Activated CD8-positive, alpha-beta T cell treated with anti-CD3 and anti-CD28 coated beads for 36 hours (primary cell): ENCODE measurements at regions of chr6 and their contacts with region 1.

Region 1: DNA sequence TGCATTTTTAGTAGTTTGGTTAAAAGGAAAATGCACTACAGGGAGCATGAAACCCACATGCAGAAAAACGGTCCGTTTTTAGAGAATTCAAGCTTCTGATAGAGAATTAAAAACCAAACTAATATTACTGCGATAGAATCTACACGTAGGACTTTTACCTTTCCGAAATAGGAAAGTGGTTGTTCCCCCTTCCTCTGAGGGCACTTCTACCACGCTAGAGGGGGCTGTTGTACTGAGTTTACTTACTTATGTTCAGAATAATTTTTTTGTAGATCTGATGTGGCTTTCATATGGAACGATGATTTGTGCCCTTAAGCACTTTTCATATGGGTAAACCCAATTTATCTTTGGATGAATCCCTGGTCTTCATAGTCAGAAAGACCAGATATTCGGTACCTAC is 264.3 kb upstream of the PLN start:
- DNase-seq: peak; percentile 68
- ATAC-seq: peak; percentile 65
- H3K4me3 Mint-ChIP-seq: no peak overlapping the region
- H3K27ac Mint-ChIP-seq: no peak overlapping the region
- H3K4me1 Mint-ChIP-seq: peaks cover 2% of the 10 kb centered on the region
- H3K27me3 Mint-ChIP-seq: peaks cover 14% of the 10 kb centered on the region
- CTCF ChIP-seq: peak; percentile 85

Region 2: GRCh38 chr6:118228886-118229285 is 54.9 kb before region 1 on chr6:
- CTCF ChIA-PET with region 1: no interaction called
- POLR2A ChIA-PET with region 1: no interaction called
- intact Hi-C with region 1: no loop called
- DNase-seq: no peak
- ATAC-seq: no peak
- H3K4me3 Mint-ChIP-seq: no peak overlapping the region
- H3K27ac Mint-ChIP-seq: no peak overlapping the region
- H3K4me1 Mint-ChIP-seq: no peaks in the 10 kb centered on the region
- H3K27me3 Mint-ChIP-seq: peaks cover 10% of the 10 kb centered on the region
- CTCF ChIP-seq: no peak

Region 3: GRCh38 chr6:118354641-118355040 is 70.9 kb after region 1 on chr6:
- CTCF ChIA-PET with region 1: no interaction called
- POLR2A ChIA-PET with region 1: no interaction called
- intact Hi-C with region 1: no loop called
- DNase-seq: no peak
- ATAC-seq: no peak
- H3K4me3 Mint-ChIP-seq: no peak overlapping the region
- H3K27ac Mint-ChIP-seq: no peak overlapping the region
- H3K4me1 Mint-ChIP-seq: no peaks in the 10 kb centered on the region
- H3K27me3 Mint-ChIP-seq: no peaks in the 10 kb centered on the region
- CTCF ChIP-seq: no peak

Region 4: GRCh38 chr6:118551063-118552053 is 267.6 kb after region 1 on chr6:
- CTCF ChIA-PET with region 1: interaction called, 9 read pairs
- POLR2A ChIA-PET with region 1: no interaction called
- intact Hi-C with region 1: loop called (anchors 2 kb)
- DNase-seq: peak; percentile 26
- ATAC-seq: peak; percentile 89
- H3K4me3 Mint-ChIP-seq: no peak overlapping the region
- H3K27ac Mint-ChIP-seq: peak overlapping the region; percentile 44
- H3K4me1 Mint-ChIP-seq: peaks cover 48% of the 10 kb centered on the region
- H3K27me3 Mint-ChIP-seq: no peaks in the 10 kb centered on the region
- CTCF ChIP-seq: peak; percentile 69

Region 5: GRCh38 chr6:118618679-118619377 is 335.1 kb after region 1 on chr6:
- CTCF ChIA-PET with region 1: interaction called, 6 read pairs
- POLR2A ChIA-PET with region 1: no interaction called
- intact Hi-C with region 1: loop called (anchors 5 kb)
- DNase-seq: peak; percentile 76
- ATAC-seq: peak; percentile 89
- H3K4me3 Mint-ChIP-seq: no peak overlapping the region
- H3K27ac Mint-ChIP-seq: peak overlapping the region; percentile 33
- H3K4me1 Mint-ChIP-seq: peaks cover 57% of the 10 kb centered on the region
- H3K27me3 Mint-ChIP-seq: no peaks in the 10 kb centered on the region
- CTCF ChIP-seq: peak; percentile 77

Region 6: GRCh38 chr6:118800394-118801071 is 516.8 kb after region 1 on chr6:
- CTCF ChIA-PET with region 1: interaction called, 18 read pairs
- POLR2A ChIA-PET with region 1: no interaction called
- intact Hi-C with region 1: loop called (anchors 10 kb)
- DNase-seq: peak; percentile 95
- ATAC-seq: peak; percentile 97
- H3K4me3 Mint-ChIP-seq: peak overlapping the region; percentile 63
- H3K27ac Mint-ChIP-seq: peak overlapping the region; percentile 76
- H3K4me1 Mint-ChIP-seq: peaks cover 34% of the 10 kb centered on the region
- H3K27me3 Mint-ChIP-seq: no peaks in the 10 kb centered on the region
- CTCF ChIP-seq: peak; percentile 85